ENCODE measurements at regions of chr10 and their contacts with region 1.

Region 1: DNA sequence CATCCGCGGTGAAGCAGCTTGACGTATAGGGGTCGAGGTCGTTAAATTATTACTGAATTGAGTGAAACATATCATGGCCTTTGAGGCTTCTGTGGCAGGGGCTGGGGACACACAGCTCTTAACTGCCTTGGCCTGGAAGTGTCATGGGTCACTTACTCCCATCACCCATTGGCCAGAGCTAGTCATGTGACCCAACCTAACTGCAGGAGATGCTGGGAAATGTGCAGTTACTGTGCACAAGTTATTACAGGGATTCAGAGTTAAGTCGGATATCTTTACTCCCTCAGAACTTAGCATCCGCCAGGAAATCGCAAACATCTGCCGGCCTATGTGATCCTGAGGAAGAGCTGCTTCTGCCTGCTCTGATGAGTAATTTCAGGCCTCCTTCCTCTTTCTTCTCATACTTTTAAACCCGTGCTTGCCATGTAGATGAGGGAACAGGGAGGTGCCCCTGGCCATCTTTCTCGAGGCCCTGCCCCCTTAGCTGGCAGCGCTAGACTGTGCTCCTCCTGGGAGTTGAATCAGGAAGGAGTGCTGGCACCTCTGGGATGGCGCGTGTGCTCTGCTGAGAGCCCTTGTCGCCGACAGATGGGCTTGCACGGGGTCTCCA is 203.6 kb downstream of the TCF7L2 start:
- DNase-seq: no peak
- H3K4me3 ChIP-seq: no peak overlapping the region
- H3K27ac ChIP-seq: peak overlapping the region in 1 of 2 donors; percentile 9
- H3K4me1 ChIP-seq: no peaks in the 10 kb centered on the region
- H3K27me3 ChIP-seq: no peaks in the 10 kb centered on the region
- CTCF ChIP-seq: no peak
- POLR2A ChIP-seq: no peak

Region 2: DNA sequence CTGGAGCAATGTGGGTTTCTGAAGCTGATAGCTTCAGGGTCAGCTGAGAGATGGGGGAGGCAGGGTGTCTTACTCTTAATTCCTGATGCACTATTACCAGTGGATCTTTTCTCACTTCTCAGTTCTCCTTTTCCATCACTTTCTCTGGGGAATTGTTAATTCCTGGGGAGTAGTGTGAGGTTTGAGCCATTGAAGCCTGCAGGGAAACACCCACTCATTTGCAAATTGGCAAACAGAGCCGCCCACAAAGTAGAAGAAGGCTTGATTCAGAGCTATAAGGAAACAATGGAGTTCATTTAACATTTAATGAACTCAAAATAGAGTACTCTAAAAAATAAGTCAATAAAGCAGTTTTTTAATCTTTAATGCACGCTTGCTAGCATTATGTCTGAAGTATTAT is 874.7 kb before region 1 on chr10:
- intact Hi-C with region 1: no loop called
- DNase-seq: no peak
- H3K4me3 ChIP-seq: no peak overlapping the region
- H3K27ac ChIP-seq: no peak overlapping the region
- H3K4me1 ChIP-seq: no peaks in the 10 kb centered on the region
- H3K27me3 ChIP-seq: no peaks in the 10 kb centered on the region
- CTCF ChIP-seq: no peak
- POLR2A ChIP-seq: no peak

Region 3: DNA sequence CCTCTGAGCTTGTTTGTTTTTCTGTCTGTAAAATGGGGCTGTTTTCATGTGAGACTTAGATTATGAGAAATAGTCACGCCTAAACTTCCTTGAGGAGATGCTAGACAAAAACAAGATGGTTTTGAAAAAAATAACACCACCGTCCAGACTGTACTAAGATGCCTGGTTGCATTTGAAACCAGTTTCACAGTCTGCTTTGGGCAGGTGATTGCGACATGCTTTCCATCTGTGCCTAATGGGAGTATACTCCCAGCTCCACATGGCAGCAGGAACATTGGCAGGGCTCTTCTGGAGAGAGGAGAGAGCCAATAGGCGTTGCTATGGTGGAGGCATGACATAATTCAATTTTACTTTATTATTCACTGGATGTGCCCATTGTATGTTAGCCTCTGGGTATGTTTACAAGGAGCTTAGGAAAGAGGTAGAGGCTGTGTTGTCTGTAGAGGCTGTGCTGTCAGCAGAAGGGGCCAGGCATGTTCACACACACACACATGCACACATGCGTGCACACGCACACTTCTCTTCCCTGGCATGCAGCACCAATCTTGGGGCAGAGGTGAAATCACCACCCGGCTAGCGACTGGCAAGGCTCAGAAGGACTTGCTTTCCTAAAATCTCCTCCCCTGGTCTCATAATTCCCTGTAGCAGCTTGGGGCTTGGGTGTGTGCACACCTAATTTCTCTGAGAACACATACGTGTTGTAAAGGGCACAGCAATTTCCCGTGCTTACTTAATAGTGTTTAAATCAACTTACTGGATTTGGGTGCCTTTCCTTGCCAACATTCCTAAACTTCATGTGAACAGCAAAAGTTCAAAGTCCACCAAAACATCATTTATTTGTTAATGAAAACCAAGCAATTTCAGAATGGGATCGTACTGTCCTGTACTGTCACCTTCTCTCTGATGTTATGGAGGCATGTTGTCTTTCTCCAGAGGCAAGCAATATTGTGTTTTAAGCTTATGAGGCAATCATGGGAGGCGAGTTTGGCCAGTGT is 41.4 kb before region 1 on chr10:
- intact Hi-C with region 1: no loop called
- DNase-seq: peak in 1 of 2 donors; percentile 47
- H3K4me3 ChIP-seq: no peak overlapping the region
- H3K27ac ChIP-seq: peak overlapping the region; percentile 53 to 75
- H3K4me1 ChIP-seq: peaks cover 0 to 3% of the 10 kb centered on the region in 2 donors
- H3K27me3 ChIP-seq: no peaks in the 10 kb centered on the region
- CTCF ChIP-seq: no peak
- POLR2A ChIP-seq: no peak

Region 4: GRCh38 chr10:113180401-113181154 is 27.0 kb after region 1 on chr10:
- intact Hi-C with region 1: loop called (anchors 1 kb)
- DNase-seq: no peak
- H3K4me3 ChIP-seq: no peak overlapping the region
- H3K27ac ChIP-seq: no peak overlapping the region
- H3K4me1 ChIP-seq: no peaks in the 10 kb centered on the region
- H3K27me3 ChIP-seq: no peaks in the 10 kb centered on the region
- CTCF ChIP-seq: no peak
- POLR2A ChIP-seq: no peak